ENCODE measurements at regions of chr4 and their contacts with region 1.

Region 1: DNA sequence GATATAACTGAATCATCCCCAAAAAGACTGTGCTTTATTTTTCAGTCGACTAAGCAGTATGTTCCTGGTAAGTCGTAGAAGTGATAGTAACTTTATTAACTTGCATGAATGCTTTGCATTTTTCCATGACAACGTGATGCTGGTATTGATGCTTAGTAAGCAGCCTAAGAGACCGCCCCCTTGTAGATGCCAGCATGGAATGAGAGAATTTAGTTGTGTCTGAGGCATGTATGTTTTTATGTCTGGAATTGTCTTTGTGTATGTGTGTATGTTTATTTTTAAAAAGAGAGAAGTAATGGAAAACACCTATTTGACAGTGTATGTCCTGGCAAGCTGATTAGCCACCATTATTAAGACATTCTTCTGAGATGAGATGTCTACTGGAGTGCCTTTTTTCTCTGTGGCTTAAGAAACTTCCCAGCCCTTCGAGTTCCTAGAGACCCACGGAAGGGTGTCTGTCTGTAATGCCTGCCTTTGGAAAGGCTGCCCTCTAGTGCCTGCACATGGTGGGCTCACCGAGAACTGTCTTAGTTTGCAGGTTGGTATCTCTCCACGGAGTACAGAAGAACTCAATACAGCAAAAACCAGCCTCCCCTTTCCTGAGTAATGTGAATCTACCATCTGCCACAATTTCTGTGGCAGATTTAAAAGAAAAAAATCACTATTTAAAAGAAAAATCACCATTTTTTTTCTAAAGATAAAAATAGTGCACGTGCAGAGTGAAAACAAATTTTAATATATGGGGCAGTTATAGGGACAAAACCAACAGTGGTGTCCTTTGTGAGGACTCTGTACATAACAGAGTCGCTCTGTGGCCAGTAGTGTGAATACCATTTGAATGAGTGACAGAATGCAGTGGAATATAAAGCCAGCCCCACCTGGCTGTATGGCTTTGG is 85.9 kb downstream of the AASDH start:
- DNase-seq: peak; percentile 27 to 71 (median 67)
- ATAC-seq: peak; percentile 92
- H3K4me3 ChIP-seq: peak overlapping the region; percentile 13
- H3K4me3 Mint-ChIP-seq: peak overlapping the region; percentile 46 to 79 (median 64)
- H3K27ac ChIP-seq: no peak overlapping the region
- H3K27ac Mint-ChIP-seq: peak overlapping the region in 3 of 9 donors; percentile 4 to 41 (median 32)
- H3K4me1 ChIP-seq: no peaks in the 10 kb centered on the region
- H3K4me1 Mint-ChIP-seq: peaks cover 4 to 21% (median 16%) of the 10 kb centered on the region in 7 donors
- H3K27me3 ChIP-seq: no peaks in the 10 kb centered on the region
- H3K27me3 Mint-ChIP-seq: peaks cover 0 to 7% (median 0%) of the 10 kb centered on the region in 5 donors

Region 2: DNA sequence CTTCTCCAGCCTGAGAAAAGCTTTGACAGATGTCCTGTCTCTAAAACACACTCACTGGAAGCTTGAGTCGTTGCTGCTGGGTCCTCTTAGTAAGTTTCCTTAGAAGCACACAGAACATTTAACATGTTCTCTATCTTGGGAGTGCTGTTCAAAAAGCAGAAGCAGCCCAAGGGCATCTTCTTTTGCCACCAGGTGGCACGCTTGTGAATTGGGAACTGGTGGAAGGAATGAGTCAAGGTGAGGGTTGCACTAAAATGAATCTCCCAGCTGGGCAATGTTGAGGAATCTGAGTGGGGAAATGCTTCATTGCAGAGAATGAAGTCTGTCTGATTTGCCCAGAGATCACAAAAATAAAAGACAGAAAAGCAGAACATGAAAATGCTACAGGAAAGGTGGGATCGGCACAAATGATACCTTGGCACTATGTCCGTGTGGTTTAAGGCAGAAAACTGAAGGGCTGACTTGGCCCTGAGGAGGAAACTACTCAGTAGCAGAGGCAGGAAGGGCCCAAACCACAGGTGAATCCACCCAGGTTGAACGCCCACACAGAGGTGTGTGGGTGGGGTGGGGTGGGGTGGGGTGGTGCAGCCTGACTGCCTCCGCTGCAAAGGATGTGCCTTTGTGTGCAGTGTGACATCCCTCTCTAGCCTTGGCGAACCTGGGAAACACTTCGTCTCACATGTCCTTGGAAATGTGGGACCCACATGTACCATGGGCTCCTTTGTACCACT is 1617.6 kb before region 1 on chr4:
- CTCF ChIA-PET with region 1: no interaction called
- POLR2A ChIA-PET with region 1: no interaction called
- intact Hi-C with region 1: loop called in 1 of 2 experiments (anchors 2 kb)
- DNase-seq: peak; percentile 21 to 65 (median 45)
- ATAC-seq: peak; percentile 65
- H3K4me3 ChIP-seq: no peak overlapping the region
- H3K4me3 Mint-ChIP-seq: peak overlapping the region; percentile 44 to 85 (median 69)
- H3K27ac ChIP-seq: no peak overlapping the region
- H3K27ac Mint-ChIP-seq: peak overlapping the region in 8 of 9 donors; percentile 10 to 92 (median 80)
- H3K4me1 ChIP-seq: peaks cover 0 to 7% of the 10 kb centered on the region in 2 donors
- H3K4me1 Mint-ChIP-seq: peaks cover 15 to 36% (median 29%) of the 10 kb centered on the region in 7 donors
- H3K27me3 ChIP-seq: no peaks in the 10 kb centered on the region
- H3K27me3 Mint-ChIP-seq: no peaks in the 10 kb centered on the region

Region 3: GRCh38 chr4:55312489-55313101 is 988.8 kb before region 1 on chr4:
- CTCF ChIA-PET with region 1: no interaction called
- POLR2A ChIA-PET with region 1: no interaction called
- intact Hi-C with region 1: loop called in 1 of 2 experiments (anchors 2 kb)
- DNase-seq: peak in 7 of 9 donors; percentile 6 to 34 (median 30)
- ATAC-seq: peak; percentile 68
- H3K4me3 ChIP-seq: no peak overlapping the region
- H3K4me3 Mint-ChIP-seq: no peak overlapping the region
- H3K27ac ChIP-seq: no peak overlapping the region
- H3K27ac Mint-ChIP-seq: no peak overlapping the region
- H3K4me1 ChIP-seq: no peaks in the 10 kb centered on the region
- H3K4me1 Mint-ChIP-seq: peaks cover 0 to 4% (median 0%) of the 10 kb centered on the region in 7 donors
- H3K27me3 ChIP-seq: no peaks in the 10 kb centered on the region
- H3K27me3 Mint-ChIP-seq: peaks cover 0 to 7% (median 0%) of the 10 kb centered on the region in 5 donors

Region 4: DNA sequence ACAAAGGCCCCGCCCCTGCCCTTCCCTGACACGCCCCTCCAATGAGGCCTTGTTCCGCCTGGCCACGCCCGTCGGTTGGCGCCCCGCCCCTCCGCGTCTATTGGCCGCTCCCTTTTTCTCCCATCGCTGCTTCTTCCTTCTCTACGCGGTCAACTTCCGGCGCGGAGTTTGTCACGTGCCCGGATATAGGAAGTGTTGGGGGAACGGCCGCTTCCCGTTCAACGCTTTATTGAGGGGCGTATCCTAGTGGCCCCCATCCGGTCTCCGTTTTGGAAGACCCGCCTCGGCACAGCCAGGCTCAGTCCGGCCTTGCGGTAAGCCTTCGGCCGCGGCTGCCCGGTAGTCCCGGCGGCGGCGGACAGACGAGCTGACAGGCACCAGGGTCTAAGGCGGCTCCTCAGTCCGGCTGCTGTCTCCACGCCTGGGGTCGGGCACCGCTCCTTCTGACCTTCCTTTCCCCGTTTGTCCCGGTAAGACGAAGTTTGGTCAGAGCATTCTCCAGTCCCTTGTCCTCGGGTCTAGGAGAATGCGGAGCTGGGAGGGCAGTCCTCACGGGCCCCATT is 447.9 kb before region 1 on chr4 and contains the start of gene EXOC1:
- CTCF ChIA-PET with region 1: no interaction called
- POLR2A ChIA-PET with region 1: no interaction called
- intact Hi-C with region 1: loop called in 1 of 2 experiments (anchors 5 kb)
- DNase-seq: peak; percentile 93 to 98 (median 94)
- ATAC-seq: peak; percentile 99
- H3K4me3 ChIP-seq: peak within 1 kb of the TSS; percentile 84
- H3K4me3 Mint-ChIP-seq: peak within 1 kb of the TSS in 2 of 10 donors; percentile 34 to 69
- H3K27ac ChIP-seq: peak within 1 kb of the TSS; percentile 87
- H3K27ac Mint-ChIP-seq: peak within 1 kb of the TSS in 7 of 9 donors; percentile 75 to 94 (median 90)
- H3K4me1 ChIP-seq: peaks cover 26 to 31% of the 10 kb centered on the region in 2 donors
- H3K4me1 Mint-ChIP-seq: peaks cover 22 to 48% (median 42%) of the 10 kb centered on the region in 7 donors
- H3K27me3 ChIP-seq: no peaks in the 10 kb centered on the region
- H3K27me3 Mint-ChIP-seq: no peaks in the 10 kb centered on the region
- total RNA-seq, gene EXOC1: 20.3 to 46.7 (median 32.1) TPM

Region 5: GRCh38 chr4:55906999-55907398 is 394.4 kb before region 1 on chr4:
- CTCF ChIA-PET with region 1: no interaction called
- POLR2A ChIA-PET with region 1: no interaction called
- intact Hi-C with region 1: loop called in 1 of 2 experiments (anchors 5 kb)
- DNase-seq: peak in 1 of 9 donors; percentile 6
- ATAC-seq: no peak
- H3K4me3 ChIP-seq: no peak overlapping the region
- H3K4me3 Mint-ChIP-seq: peak overlapping the region in 9 of 10 donors; percentile 6 to 69 (median 52)
- H3K27ac ChIP-seq: no peak overlapping the region
- H3K27ac Mint-ChIP-seq: peak overlapping the region in 8 of 9 donors; percentile 14 to 82 (median 62)
- H3K4me1 ChIP-seq: no peaks in the 10 kb centered on the region
- H3K4me1 Mint-ChIP-seq: peaks cover 11 to 31% (median 25%) of the 10 kb centered on the region in 7 donors
- H3K27me3 ChIP-seq: no peaks in the 10 kb centered on the region
- H3K27me3 Mint-ChIP-seq: no peaks in the 10 kb centered on the region

Region 6: GRCh38 chr4:56129431-56129861 is 172.0 kb before region 1 on chr4:
- CTCF ChIA-PET with region 1: no interaction called
- POLR2A ChIA-PET with region 1: no interaction called
- intact Hi-C with region 1: loop called (anchors 1 to 2 kb)
- DNase-seq: peak in 1 of 9 donors; percentile 3
- ATAC-seq: peak; percentile 36
- H3K4me3 ChIP-seq: no peak overlapping the region
- H3K4me3 Mint-ChIP-seq: no peak overlapping the region
- H3K27ac ChIP-seq: no peak overlapping the region
- H3K27ac Mint-ChIP-seq: no peak overlapping the region
- H3K4me1 ChIP-seq: no peaks in the 10 kb centered on the region
- H3K4me1 Mint-ChIP-seq: no peaks in the 10 kb centered on the region
- H3K27me3 ChIP-seq: no peaks in the 10 kb centered on the region
- H3K27me3 Mint-ChIP-seq: peaks cover 5 to 13% (median 7%) of the 10 kb centered on the region in 5 donors